Activated T-helper 2 cell treated with anti-CD3 and anti-CD28 coated beads, Interferon-gamma antibody, Interleukin-2, Interleukin-4, amounts not matched to agents 10 μg/mL and 5 μg/mL and 100 μg/mL, durations not matched to agents 14 hours and 24 hours and 36 hours (primary cell): ENCODE measurements at regions of chr1 and their contacts with region 1.

Region 1: DNA sequence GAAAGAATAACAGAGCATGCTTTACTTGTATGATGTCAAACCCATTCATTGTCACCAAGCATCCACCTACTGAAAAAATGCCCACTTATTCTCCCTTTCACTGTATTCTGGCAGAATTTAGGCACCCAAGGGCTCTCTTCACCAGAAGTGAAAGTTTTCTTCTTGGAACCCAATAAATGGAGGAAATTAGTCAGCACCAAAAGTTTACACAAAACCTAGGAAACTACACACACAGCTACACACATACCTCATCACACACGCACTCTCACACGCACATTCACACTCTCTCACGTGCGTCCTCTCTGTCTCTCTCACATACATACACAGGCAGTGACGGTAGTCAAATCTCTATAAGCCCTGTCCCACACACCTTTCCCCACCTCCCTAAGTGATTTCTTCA is 37.6 kb downstream of the MCOLN2 start:
- DNase-seq: peak; percentile 51
- H3K4me3 Mint-ChIP-seq: no peak overlapping the region
- H3K27ac Mint-ChIP-seq: peak overlapping the region; percentile 75
- H3K4me1 Mint-ChIP-seq: peaks cover 36% of the 10 kb centered on the region
- H3K27me3 Mint-ChIP-seq: no peaks in the 10 kb centered on the region

Region 2: GRCh38 chr1:83931658-83932253 is 1027.5 kb before region 1 on chr1:
- intact Hi-C with region 1: no loop called
- DNase-seq: no peak
- H3K4me3 Mint-ChIP-seq: no peak overlapping the region
- H3K27ac Mint-ChIP-seq: no peak overlapping the region
- H3K4me1 Mint-ChIP-seq: no peaks in the 10 kb centered on the region
- H3K27me3 Mint-ChIP-seq: peaks cover 18% of the 10 kb centered on the region

Region 3: DNA sequence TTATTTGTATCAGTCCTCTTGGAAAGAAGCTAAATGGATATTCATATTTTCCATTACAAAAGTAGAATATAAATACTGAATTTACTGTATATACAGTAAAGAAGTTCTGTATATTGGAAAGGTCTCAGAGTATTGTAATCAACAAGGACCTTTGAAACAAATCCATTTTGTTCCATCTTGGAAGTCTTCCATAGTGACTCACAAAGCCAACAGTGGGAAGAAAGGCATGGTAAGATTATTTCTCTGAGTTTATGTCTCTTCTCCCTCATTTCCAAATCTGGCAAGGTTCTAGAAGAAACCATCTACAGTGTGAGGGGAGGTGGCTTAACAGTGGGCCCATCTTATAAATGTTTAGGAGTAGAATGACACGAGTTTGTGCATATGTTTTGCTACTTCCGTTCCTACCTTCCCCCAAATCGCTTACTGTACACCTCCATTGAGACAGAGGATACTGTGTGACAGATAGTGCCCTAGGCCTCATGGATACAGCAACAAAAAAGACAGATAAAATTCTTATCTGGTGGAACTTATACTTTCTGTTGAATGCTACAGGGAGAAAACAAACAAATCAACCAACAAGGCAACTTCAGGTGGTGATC is 246.9 kb before region 1 on chr1:
- intact Hi-C with region 1: no loop called
- DNase-seq: no peak
- H3K4me3 Mint-ChIP-seq: no peak overlapping the region
- H3K27ac Mint-ChIP-seq: no peak overlapping the region
- H3K4me1 Mint-ChIP-seq: no peaks in the 10 kb centered on the region
- H3K27me3 Mint-ChIP-seq: no peaks in the 10 kb centered on the region

Region 4: GRCh38 chr1:84800090-84801073 is 158.9 kb before region 1 on chr1:
- intact Hi-C with region 1: no loop called
- DNase-seq: no peak
- H3K4me3 Mint-ChIP-seq: no peak overlapping the region
- H3K27ac Mint-ChIP-seq: no peak overlapping the region
- H3K4me1 Mint-ChIP-seq: no peaks in the 10 kb centered on the region
- H3K27me3 Mint-ChIP-seq: peaks cover 17% of the 10 kb centered on the region

Region 5: GRCh38 chr1:84988588-84988987 is 29.3 kb after region 1 on chr1:
- intact Hi-C with region 1: loop called (anchors 1 kb)
- DNase-seq: no peak
- H3K4me3 Mint-ChIP-seq: peak overlapping the region; percentile 38
- H3K27ac Mint-ChIP-seq: peak overlapping the region; percentile 71
- H3K4me1 Mint-ChIP-seq: peaks cover 59% of the 10 kb centered on the region
- H3K27me3 Mint-ChIP-seq: no peaks in the 10 kb centered on the region

Region 6: DNA sequence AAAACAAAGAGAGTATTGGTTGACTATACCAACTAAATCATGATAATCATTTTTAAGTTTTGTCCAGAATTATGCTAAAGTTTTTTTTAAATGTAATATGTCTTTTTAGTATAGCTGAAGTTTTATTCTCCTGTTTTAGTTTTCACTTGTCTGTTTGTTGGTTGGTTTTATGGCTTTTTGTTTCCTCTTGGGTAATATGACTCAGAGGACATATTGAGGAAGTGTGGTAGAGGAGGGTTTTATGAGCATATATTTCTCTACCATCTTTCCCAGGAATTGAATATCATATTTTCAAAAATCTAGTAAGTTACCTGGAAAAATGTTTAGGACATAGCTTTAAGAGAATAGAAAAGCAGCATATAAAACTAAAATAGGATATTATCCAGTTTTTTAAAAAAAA is 157.6 kb after region 1 on chr1:
- intact Hi-C with region 1: no loop called
- DNase-seq: no peak
- H3K4me3 Mint-ChIP-seq: no peak overlapping the region
- H3K27ac Mint-ChIP-seq: no peak overlapping the region
- H3K4me1 Mint-ChIP-seq: peaks cover 5% of the 10 kb centered on the region
- H3K27me3 Mint-ChIP-seq: peaks cover 7% of the 10 kb centered on the region